ENCODE measurements at regions of chr11 and their contacts with region 1.

Region 1: GRCh38 chr11:447923-448731 is 2.0 kb upstream of the PTDSS2 start:
- DNase-seq: peak; percentile 90 to 99 (median 94)
- ATAC-seq: peak; percentile 61 to 62
- H3K4me3 Mint-ChIP-seq: peak overlapping the region; percentile 84 to 93 (median 88)
- H3K27ac Mint-ChIP-seq: peak overlapping the region; percentile 87 to 99 (median 97)
- H3K4me1 Mint-ChIP-seq: peaks cover 11 to 35% (median 28%) of the 10 kb centered on the region in 4 donors
- H3K27me3 Mint-ChIP-seq: no peaks in the 10 kb centered on the region

Region 2: DNA sequence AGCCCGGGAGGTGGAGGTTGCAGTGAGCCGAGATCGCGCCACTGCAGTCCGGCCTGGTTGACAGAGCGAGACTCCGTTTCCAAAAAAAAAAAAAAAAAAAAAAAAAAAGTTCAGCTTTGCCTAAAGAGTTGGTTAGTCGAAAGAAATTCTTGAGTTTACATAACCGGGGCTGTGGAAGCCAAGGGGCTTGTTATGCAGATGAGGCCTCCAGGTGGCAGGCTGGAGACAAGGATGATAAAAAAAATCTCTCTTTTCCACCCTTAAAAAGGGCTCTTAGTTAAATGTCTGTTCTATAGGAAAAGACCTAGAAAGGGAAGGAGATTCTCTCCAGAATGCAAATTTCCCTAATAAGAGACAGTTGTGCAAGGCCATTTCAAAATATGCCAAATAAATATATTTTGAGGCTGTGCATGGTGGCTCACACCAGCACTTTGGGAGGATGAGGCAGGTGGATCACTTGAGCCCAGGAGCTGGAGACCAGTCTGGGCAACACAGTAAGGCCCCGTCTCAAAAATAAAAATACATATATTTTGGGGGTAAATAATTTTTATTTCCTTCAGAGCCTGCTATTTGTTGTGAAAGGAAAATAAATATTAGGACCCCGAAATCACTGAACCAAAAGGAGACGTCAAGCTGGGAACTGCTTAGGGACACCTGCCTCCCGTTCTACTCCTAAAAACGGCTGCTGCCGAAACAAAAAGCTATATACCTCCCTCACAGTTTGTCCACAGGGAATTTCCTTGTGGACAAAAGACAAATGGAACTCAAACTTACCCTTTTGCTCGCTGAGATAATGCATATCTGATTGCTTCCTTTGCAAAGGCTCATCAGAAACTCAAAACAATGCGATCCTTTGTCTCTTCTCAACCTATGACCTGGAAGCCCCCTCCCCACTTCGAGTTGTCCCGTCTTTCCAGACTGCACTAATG is 142.9 kb before region 1 on chr11:
- POLR2A ChIA-PET with region 1: interaction called, 35 read pairs
- DNase-seq: peak in 8 of 10 donors; percentile 59 to 86 (median 71)
- ATAC-seq: peak; percentile 11 to 30
- H3K4me3 Mint-ChIP-seq: peak overlapping the region in 7 of 10 donors; percentile 30 to 72 (median 36)
- H3K27ac Mint-ChIP-seq: peak overlapping the region; percentile 48 to 97 (median 88)
- H3K4me1 Mint-ChIP-seq: peaks cover 32 to 74% (median 63%) of the 10 kb centered on the region in 4 donors
- H3K27me3 Mint-ChIP-seq: peaks cover 0 to 2% (median 0%) of the 10 kb centered on the region in 5 donors

Region 3: DNA sequence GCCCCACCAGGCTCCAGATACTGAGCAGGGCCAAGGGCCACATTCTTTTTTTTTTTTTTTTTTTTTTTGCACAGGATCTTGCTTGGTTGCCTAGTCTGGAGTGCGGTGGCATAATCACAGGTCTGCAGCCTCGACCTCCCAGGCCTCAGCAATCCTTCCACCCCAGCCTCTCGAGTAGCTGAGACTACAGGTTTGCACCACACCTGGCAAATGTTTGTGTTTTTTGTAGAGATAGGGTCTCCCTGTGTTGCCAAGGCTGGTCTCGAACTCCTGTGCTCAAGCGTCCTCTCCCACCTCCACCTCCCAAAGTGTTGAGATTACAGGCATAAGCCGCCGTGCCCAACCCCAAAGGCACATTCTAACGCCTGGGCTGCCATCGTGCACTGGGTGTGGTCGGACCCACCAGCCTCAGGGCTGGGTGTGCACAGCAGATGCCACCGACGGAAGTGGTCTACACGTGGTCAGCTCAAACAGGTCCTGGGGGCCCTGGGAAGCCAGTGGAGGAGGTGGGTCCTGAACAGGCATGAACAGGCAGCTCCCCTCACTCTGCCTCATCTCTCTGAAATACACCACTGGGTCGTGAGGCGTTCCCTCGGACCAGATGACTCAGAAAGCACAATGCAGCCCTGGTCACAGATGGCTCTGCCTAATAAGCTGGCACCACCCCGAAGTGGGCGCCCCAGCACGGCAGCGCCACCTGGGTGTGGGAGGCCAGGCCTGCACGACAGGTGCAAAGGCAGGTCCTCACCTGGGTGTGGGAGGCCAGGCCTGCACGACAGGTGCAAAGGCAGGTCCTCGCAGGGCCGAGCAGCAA is 84.0 kb before region 1 on chr11:
- POLR2A ChIA-PET with region 1: interaction called, 10 read pairs
- DNase-seq: peak in 8 of 10 donors; percentile 42 to 63 (median 52)
- ATAC-seq: peak; percentile 66 to 81
- H3K4me3 Mint-ChIP-seq: peak overlapping the region in 1 of 10 donors; percentile 57
- H3K27ac Mint-ChIP-seq: peak overlapping the region in 2 of 10 donors; percentile 67 to 85
- H3K4me1 Mint-ChIP-seq: peaks cover 10 to 27% (median 20%) of the 10 kb centered on the region in 4 donors
- H3K27me3 Mint-ChIP-seq: peaks cover 12 to 42% (median 21%) of the 10 kb centered on the region in 5 donors

Region 4: GRCh38 chr11:406978-407739 is 41.0 kb before region 1 on chr11:
- POLR2A ChIA-PET with region 1: interaction called, 144 read pairs
- DNase-seq: peak; percentile 62 to 98 (median 95)
- ATAC-seq: peak; percentile 90 to 95
- H3K4me3 Mint-ChIP-seq: peak overlapping the region in 7 of 10 donors; percentile 22 to 76 (median 58)
- H3K27ac Mint-ChIP-seq: peak overlapping the region in 9 of 10 donors; percentile 43 to 93 (median 79)
- H3K4me1 Mint-ChIP-seq: peaks cover 7 to 31% (median 15%) of the 10 kb centered on the region in 4 donors
- H3K27me3 Mint-ChIP-seq: no peaks in the 10 kb centered on the region

Region 5: GRCh38 chr11:416757-417621 is 31.1 kb before region 1 on chr11:
- POLR2A ChIA-PET with region 1: interaction called, 144 read pairs
- DNase-seq: peak in 6 of 10 donors; percentile 13 to 52 (median 45)
- ATAC-seq: peak; percentile 20 to 33
- H3K4me3 Mint-ChIP-seq: peak overlapping the region in 9 of 10 donors; percentile 92 to 100 (median 98)
- H3K27ac Mint-ChIP-seq: peak overlapping the region in 3 of 10 donors; percentile 31 to 95 (median 92)
- H3K4me1 Mint-ChIP-seq: peaks cover 9 to 44% (median 32%) of the 10 kb centered on the region in 4 donors
- H3K27me3 Mint-ChIP-seq: no peaks in the 10 kb centered on the region

Region 6: GRCh38 chr11:494761-495536 is 46.8 kb after region 1 on chr11:
- POLR2A ChIA-PET with region 1: no interaction called
- DNase-seq: no peak
- ATAC-seq: no peak
- H3K4me3 Mint-ChIP-seq: no peak overlapping the region
- H3K27ac Mint-ChIP-seq: peak overlapping the region in 4 of 10 donors; percentile 48 to 76 (median 64)
- H3K4me1 Mint-ChIP-seq: peaks cover 0 to 9% (median 4%) of the 10 kb centered on the region in 4 donors
- H3K27me3 Mint-ChIP-seq: no peaks in the 10 kb centered on the region

Region 7: DNA sequence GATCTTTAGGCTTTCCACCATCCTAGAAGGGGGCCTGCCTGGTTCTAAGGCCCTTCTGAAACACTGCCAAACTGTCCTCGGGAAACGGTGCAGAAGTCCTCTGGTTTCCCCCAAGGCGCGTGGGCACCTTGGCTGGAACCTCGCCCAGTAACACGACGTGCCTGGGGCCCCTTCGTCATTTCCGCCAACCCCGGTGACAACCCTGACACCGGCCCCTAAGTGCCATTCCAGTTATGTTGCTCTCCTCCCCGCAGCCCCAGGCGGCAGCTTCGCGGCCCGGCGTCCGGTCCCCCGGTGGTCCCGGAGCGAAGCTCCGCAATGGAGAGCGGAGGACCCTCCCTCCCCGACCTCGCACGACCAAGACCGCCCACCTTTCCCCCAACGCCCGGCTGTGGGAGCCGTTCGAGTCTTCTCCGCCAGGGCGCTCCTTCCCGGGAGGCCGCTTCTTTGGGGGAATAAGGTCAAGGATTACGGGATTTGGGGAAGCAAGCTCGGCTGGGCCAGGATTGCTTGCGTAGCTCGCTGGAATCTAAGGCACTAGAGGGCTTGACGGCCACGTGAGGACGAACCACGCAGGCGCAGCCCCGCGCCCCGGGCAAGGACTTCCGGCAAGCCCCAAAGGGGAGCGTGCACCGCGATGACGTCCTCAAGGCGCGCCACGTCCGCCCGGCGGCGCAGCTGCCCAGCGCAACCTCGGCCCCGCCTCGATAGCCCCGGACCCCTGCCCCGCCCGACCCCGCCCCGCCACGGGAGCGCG is 58.3 kb after region 1 on chr11:
- POLR2A ChIA-PET with region 1: interaction called, 10 read pairs
- DNase-seq: peak; percentile 92 to 98 (median 96)
- ATAC-seq: peak; percentile 75 to 76
- H3K4me3 Mint-ChIP-seq: peak overlapping the region; percentile 95 to 99 (median 98)
- H3K27ac Mint-ChIP-seq: peak overlapping the region; percentile 97 to 100 (median 100)
- H3K4me1 Mint-ChIP-seq: peaks cover 8 to 40% (median 25%) of the 10 kb centered on the region in 4 donors
- H3K27me3 Mint-ChIP-seq: no peaks in the 10 kb centered on the region

Region 8: GRCh38 chr11:568306-569157 is 120.4 kb after region 1 on chr11:
- POLR2A ChIA-PET with region 1: no interaction called
- DNase-seq: peak; percentile 88 to 95 (median 93)
- ATAC-seq: peak; percentile 92 to 93
- H3K4me3 Mint-ChIP-seq: peak overlapping the region; percentile 61 to 88 (median 80)
- H3K27ac Mint-ChIP-seq: peak overlapping the region in 6 of 10 donors; percentile 15 to 83 (median 70)
- H3K4me1 Mint-ChIP-seq: peaks cover 0 to 10% (median 3%) of the 10 kb centered on the region in 4 donors
- H3K27me3 Mint-ChIP-seq: no peaks in the 10 kb centered on the region

Measured in naive thymus-derived CD8-positive, alpha-beta T cell (primary cell).